HepG2 (cell line): ENCODE measurements at regions of chr2 and their contacts with region 1.

Region 1: GRCh38 chr2:207625018-207625907 is at the start of gene METTL21A:
- DNase-seq: peak; percentile 94
- ATAC-seq: peak; percentile 80
- H3K4me3 ChIP-seq: peak within 1 kb of the TSS; percentile 80 to 92 (median 89)
- H3K27ac ChIP-seq: peak within 1 kb of the TSS; percentile 87
- H3K4me1 ChIP-seq: peaks cover 66% of the 10 kb centered on the region
- H3K27me3 ChIP-seq: no peaks in the 10 kb centered on the region; a peak in 1 of 5 replicates
- CTCF ChIP-seq: peak; percentile 92
- EP300 ChIP-seq: peak in 1 of 2 experiments; percentile 68; a peak in 3 of 4 replicates
- POLR2A ChIP-seq: peak; percentile 83 to 88
- RAD21 ChIP-seq: peak; percentile 69
- total RNA-seq, gene METTL21A: 61.2 and 65.1 TPM in 2 replicates

Region 2: DNA sequence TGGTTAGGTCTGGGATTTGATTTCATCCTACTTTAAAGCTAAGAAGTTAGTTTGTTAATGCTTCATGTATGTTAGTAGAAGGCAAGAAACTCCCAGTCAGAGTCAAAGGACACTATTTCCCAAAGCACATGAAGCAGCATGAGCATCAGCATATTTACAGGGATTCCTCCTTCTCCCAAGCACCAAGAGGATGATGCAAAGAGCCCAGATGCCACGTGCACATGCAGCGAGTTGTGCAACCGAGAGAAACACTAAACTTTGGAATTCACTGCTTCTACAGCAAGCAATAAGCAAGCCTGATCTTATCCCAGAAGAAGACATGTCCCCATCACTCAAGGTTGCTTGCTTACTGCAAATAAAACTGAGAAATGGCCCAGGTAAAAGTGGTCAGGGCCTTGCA is 653.5 kb before region 1 on chr2:
- CTCF ChIA-PET with region 1: no interaction called
- POLR2A ChIA-PET with region 1: no interaction called
- in situ Hi-C with region 1: no loop called
- intact Hi-C with region 1: no loop called
- DNase-seq: no peak
- ATAC-seq: no peak
- H3K4me3 ChIP-seq: no peak overlapping the region
- H3K27ac ChIP-seq: no peak overlapping the region
- H3K4me1 ChIP-seq: peaks cover 11% of the 10 kb centered on the region; the same call in 1 of the 2 replicates
- H3K27me3 ChIP-seq: no peaks in the 10 kb centered on the region
- CTCF ChIP-seq: no peak
- EP300 ChIP-seq: no peak
- POLR2A ChIP-seq: no peak
- RAD21 ChIP-seq: no peak

Region 3: GRCh38 chr2:207230261-207231105 is 394.8 kb before region 1 on chr2:
- CTCF ChIA-PET with region 1: no interaction called
- POLR2A ChIA-PET with region 1: no interaction called
- in situ Hi-C with region 1: no loop called
- intact Hi-C with region 1: no loop called
- DNase-seq: peak; percentile 21
- ATAC-seq: peak; percentile 93
- H3K4me3 ChIP-seq: no peak overlapping the region
- H3K27ac ChIP-seq: no peak overlapping the region
- H3K4me1 ChIP-seq: no peaks in the 10 kb centered on the region
- H3K27me3 ChIP-seq: no peaks in the 10 kb centered on the region; a peak in 1 of 5 replicates
- CTCF ChIP-seq: peak; percentile 57
- EP300 ChIP-seq: no peak
- POLR2A ChIP-seq: no peak
- RAD21 ChIP-seq: no peak

Region 4: GRCh38 chr2:207529330-207530159 is 95.7 kb before region 1 on chr2 and contains the start of gene CREB1:
- CTCF ChIA-PET with region 1: no interaction called
- POLR2A ChIA-PET with region 1: interaction called, 30 read pairs
- in situ Hi-C with region 1: no loop called
- intact Hi-C with region 1: loop called (anchors 2 kb)
- DNase-seq: peak; percentile 94
- ATAC-seq: peak; percentile 96
- H3K4me3 ChIP-seq: peak within 1 kb of the TSS; percentile 93 to 98 (median 94)
- H3K27ac ChIP-seq: peak within 1 kb of the TSS; percentile 96
- H3K4me1 ChIP-seq: peaks cover 44% of the 10 kb centered on the region
- H3K27me3 ChIP-seq: no peaks in the 10 kb centered on the region; a peak in 1 of 5 replicates
- CTCF ChIP-seq: peak; percentile 73
- EP300 ChIP-seq: no peak; a peak in 1 of 4 replicates
- POLR2A ChIP-seq: peak; percentile 90 to 94
- RAD21 ChIP-seq: peak; percentile 30
- total RNA-seq, gene CREB1: 51.9 and 79.5 TPM in 2 replicates

Region 5: DNA sequence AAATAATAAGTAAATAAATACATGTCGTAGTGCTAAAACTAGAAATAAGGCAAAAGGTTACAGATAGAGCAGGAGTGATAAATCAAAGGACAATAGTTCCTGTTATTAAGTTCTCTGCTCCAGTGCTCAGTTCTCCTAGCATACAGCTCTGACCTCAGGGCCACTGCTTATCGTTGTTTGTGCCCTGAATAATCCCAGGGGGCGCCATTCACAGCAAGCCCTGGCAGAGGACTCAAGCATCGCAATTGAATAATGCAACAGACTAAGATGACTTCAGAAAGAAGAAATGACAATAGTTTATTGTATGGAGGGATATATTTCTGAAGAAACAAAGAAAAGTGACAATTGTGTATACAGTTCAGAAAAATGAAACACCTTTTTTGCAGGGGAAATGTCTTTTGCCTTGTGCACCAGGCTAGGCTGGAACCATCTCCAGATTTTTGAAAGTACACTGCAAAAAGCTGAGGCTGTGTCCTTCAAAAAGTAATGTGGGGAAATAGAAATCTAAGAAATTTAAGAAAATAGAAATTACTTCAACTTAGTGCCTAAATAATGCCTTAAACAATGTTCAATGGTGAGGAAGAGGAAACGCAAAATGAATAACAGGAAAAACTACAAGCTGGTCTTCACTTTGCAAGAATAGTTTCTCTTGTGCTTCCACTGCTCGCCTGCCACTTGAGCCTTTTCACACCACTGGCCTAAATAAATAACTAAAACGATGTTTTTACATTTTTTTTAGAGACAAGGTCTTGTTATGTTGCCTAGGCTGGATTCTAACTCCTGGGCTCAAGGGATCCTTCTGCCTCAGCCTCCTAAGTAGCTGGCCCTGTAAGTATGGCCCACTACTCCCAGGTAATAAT is 67.2 kb after region 1 on chr2:
- CTCF ChIA-PET with region 1: no interaction called
- POLR2A ChIA-PET with region 1: interaction called, 5 read pairs
- in situ Hi-C with region 1: no loop called
- intact Hi-C with region 1: loop called (anchors 5 kb)
- DNase-seq: peak; percentile 58
- ATAC-seq: peak; percentile 91
- H3K4me3 ChIP-seq: no peak overlapping the region
- H3K27ac ChIP-seq: no peak overlapping the region
- H3K4me1 ChIP-seq: peaks cover 46% of the 10 kb centered on the region
- H3K27me3 ChIP-seq: 0 out of 5 replicates have a peak, but pooled peaks cover 0 to 4% of the 10 kb centered on the region in 2 experiments
- CTCF ChIP-seq: peak; percentile 75
- EP300 ChIP-seq: no peak
- POLR2A ChIP-seq: no peak
- RAD21 ChIP-seq: peak; percentile 63

Region 6: GRCh38 chr2:208033758-208034502 is 408.7 kb after region 1 on chr2:
- CTCF ChIA-PET with region 1: no interaction called
- POLR2A ChIA-PET with region 1: interaction called, 6 read pairs
- in situ Hi-C with region 1: loop called (anchors 5 kb)
- intact Hi-C with region 1: loop called (anchors 2 kb)
- DNase-seq: peak; percentile 97
- ATAC-seq: peak; percentile 90
- H3K4me3 ChIP-seq: peak overlapping the region; percentile 4 to 16 (median 14); a peak in 2 of 6 replicates
- H3K27ac ChIP-seq: peak overlapping the region; percentile 70
- H3K4me1 ChIP-seq: peaks cover 70% of the 10 kb centered on the region
- H3K27me3 ChIP-seq: no peaks in the 10 kb centered on the region
- CTCF ChIP-seq: peak; percentile 98
- EP300 ChIP-seq: peak; percentile 53 to 55; a peak in 3 of 4 replicates
- POLR2A ChIP-seq: no peak
- RAD21 ChIP-seq: peak; percentile 91

Region 7: DNA sequence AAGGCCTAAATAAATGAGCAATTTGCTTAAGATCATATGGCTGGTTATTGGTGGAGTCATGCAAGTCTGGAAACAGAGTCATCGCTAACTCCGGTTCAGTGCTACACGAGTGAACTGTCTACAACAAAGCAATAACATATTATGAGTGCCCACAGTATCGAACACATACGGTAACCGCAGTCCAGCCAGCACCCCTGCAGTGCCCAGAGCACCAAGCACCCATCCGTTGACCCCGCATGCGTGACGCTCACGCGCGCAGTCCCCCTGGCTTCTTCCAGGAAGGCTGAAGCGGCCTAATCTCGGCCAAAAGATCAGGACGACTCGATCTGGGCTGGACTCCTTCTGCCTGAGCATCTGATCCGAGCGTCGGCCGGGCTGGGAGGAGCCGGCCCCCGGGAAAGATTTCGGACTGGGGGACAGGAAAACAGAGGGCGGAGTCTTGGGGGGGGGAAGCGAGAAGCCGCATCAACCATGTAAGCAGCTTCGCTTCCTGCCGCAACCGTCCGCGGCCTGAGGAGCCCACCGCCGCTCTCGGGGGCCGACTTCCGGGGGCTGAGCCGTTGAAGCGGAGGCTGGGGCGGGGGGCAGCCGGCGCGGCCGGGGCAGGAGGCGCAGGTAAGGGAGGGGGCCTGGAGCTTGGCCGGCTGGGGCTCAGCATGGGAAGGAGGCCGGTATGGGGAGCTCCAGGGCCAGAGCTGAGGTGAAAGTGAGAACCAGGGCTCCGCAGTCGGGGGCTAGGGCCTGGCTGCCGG is 640.7 kb after region 1 on chr2 and contains the start of gene PIKFYVE:
- CTCF ChIA-PET with region 1: no interaction called
- POLR2A ChIA-PET with region 1: interaction called, 8 read pairs
- in situ Hi-C with region 1: no loop called
- intact Hi-C with region 1: loop called (anchors 1 kb)
- DNase-seq: peak; percentile 99
- ATAC-seq: peak; percentile 94
- H3K4me3 ChIP-seq: peak within 1 kb of the TSS; percentile 71 to 87 (median 86)
- H3K27ac ChIP-seq: peak within 1 kb of the TSS; percentile 79
- H3K4me1 ChIP-seq: peaks cover 45% of the 10 kb centered on the region
- H3K27me3 ChIP-seq: no peaks in the 10 kb centered on the region; a peak in 1 of 5 replicates
- CTCF ChIP-seq: 0 out of 2 replicates have a peak, but pooled peaks have one; percentile 40
- EP300 ChIP-seq: peak; percentile 34 to 81; a peak in 2 of 4 replicates
- POLR2A ChIP-seq: peak; percentile 62 to 76; a peak in 3 of 4 replicates
- RAD21 ChIP-seq: 0 out of 2 replicates have a peak, but pooled peaks have one; percentile 12
- total RNA-seq, gene PIKFYVE: 21.7 and 24.4 TPM in 2 replicates